ENCODE measurements at regions of chr1 and their contacts with region 1.

Region 1: GRCh38 chr1:55284852-55285251 is 69.7 kb upstream of the USP24 start:
- DNase-seq: peak; percentile 41 to 47
- H3K4me3 ChIP-seq: no peak overlapping the region
- H3K27ac ChIP-seq: no peak overlapping the region
- H3K4me1 ChIP-seq: no peaks in the 10 kb centered on the region
- H3K27me3 ChIP-seq: no peaks in the 10 kb centered on the region
- CTCF ChIP-seq: peak in 5 of 6 experiments; percentile 33 to 86 (median 51)
- POLR2A ChIP-seq: no peak

Region 2: GRCh38 chr1:55233145-55233777 is 51.6 kb before region 1 on chr1:
- intact Hi-C with region 1: no loop called
- DNase-seq: no peak
- H3K4me3 ChIP-seq: no peak overlapping the region
- H3K27ac ChIP-seq: no peak overlapping the region
- H3K4me1 ChIP-seq: no peaks in the 10 kb centered on the region
- H3K27me3 ChIP-seq: no peaks in the 10 kb centered on the region
- CTCF ChIP-seq: no peak
- POLR2A ChIP-seq: no peak

Region 3: DNA sequence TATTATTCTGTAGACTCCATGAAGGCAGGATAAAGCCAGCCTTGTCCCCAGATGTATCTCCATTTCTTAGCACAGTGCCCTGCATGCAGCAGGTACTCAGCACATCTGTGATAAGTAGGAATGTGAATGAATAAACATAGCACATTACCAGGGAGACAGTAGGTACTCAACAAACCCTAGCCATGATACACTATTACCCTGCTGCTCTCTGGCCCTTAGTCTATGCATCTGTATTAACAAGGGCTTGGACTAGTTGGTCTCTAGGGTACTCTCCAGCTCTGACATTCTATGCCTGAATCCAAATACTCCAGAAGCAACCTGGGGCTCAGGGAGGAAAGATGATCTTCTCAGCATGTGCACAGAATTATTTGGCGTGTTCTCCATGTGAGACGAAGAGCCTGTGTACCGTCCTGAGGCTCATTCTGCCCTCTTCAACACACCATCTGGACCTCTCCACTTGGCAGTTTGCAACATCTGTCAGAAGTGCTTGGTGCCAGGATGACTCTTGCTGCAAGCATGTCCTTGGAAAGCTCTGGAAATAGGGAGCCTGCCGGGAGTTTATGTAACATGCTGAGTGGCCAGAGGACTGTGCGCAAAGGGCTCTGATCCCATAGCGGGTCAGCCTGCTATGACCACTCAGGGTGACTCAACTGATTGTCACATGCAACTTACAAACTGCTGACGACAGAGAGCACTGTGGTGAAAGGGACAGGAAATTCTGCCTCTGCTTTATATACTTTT is 158.5 kb after region 1 on chr1:
- intact Hi-C with region 1: no loop called
- DNase-seq: peak; percentile 36
- H3K4me3 ChIP-seq: no peak overlapping the region
- H3K27ac ChIP-seq: peak overlapping the region in 1 of 3 donors; percentile 9
- H3K4me1 ChIP-seq: peaks cover 0 to 5% of the 10 kb centered on the region in 2 donors
- H3K27me3 ChIP-seq: no peaks in the 10 kb centered on the region
- CTCF ChIP-seq: no peak
- POLR2A ChIP-seq: no peak

Region 4: DNA sequence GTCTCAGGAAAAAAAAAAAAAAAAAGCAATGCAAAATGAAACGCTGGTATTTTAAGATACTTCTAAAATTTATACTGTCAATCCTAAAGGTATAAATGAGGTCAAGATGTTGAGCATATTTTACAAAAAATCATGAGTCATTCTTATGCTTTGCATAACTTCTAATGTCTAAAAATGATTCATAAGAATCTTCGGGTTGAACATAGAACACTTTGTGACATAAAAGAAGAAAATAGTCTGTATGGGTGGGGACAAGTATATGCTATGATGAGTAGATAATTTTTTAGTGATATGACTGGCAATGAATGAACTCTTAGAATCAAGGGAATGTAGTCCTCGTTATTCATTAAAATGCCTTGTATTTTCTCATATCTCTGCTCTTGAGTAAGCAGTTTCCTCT is 347.2 kb after region 1 on chr1:
- intact Hi-C with region 1: no loop called
- DNase-seq: no peak
- H3K4me3 ChIP-seq: no peak overlapping the region
- H3K27ac ChIP-seq: peak overlapping the region in 1 of 3 donors; percentile 44
- H3K4me1 ChIP-seq: peaks cover 14 to 18% of the 10 kb centered on the region in 2 donors
- H3K27me3 ChIP-seq: no peaks in the 10 kb centered on the region
- CTCF ChIP-seq: no peak
- POLR2A ChIP-seq: no peak

Region 5: DNA sequence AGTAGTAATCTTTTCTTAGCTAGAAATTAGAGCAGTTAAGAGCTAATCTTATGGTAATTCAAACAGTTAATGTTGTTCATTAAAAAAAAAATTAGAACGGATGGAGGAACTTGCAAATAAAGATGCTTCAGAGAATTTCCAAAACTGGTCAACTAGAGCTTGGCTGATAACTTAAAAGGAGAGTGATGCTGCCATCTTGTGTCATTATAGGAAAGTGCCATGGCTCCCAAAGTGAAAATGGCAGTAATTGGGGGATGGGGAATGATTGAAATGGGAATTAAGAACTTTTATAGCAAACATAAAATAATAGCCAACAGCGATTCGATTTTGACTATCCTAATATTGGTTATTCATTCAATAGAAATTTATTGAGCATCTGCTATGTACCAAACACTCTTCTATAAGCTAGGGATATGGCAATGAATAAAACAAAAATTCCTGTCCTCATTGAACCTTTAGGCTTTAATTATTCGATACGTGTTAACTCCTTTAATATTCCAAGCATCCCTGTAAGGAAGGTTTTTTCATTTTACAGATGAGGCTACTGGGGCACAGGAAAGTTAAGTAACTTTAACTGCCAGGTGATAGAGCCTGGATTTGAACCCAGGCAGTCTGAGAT is 1300.2 kb after region 1 on chr1:
- intact Hi-C with region 1: loop called (anchors 5 kb)
- DNase-seq: peak; percentile 21 to 32
- H3K4me3 ChIP-seq: no peak overlapping the region
- H3K27ac ChIP-seq: no peak overlapping the region
- H3K4me1 ChIP-seq: peaks cover 16 to 28% of the 10 kb centered on the region in 2 donors
- H3K27me3 ChIP-seq: no peaks in the 10 kb centered on the region
- CTCF ChIP-seq: peak; percentile 51 to 98 (median 82)
- POLR2A ChIP-seq: no peak

Region 6: GRCh38 chr1:56709269-56709880 is 1424.5 kb after region 1 on chr1:
- intact Hi-C with region 1: loop called (anchors 5 kb)
- DNase-seq: no peak
- H3K4me3 ChIP-seq: no peak overlapping the region
- H3K27ac ChIP-seq: no peak overlapping the region
- H3K4me1 ChIP-seq: no peaks in the 10 kb centered on the region
- H3K27me3 ChIP-seq: no peaks in the 10 kb centered on the region
- CTCF ChIP-seq: peak in 5 of 6 experiments; percentile 33 to 67 (median 59)
- POLR2A ChIP-seq: no peak

Region 7: DNA sequence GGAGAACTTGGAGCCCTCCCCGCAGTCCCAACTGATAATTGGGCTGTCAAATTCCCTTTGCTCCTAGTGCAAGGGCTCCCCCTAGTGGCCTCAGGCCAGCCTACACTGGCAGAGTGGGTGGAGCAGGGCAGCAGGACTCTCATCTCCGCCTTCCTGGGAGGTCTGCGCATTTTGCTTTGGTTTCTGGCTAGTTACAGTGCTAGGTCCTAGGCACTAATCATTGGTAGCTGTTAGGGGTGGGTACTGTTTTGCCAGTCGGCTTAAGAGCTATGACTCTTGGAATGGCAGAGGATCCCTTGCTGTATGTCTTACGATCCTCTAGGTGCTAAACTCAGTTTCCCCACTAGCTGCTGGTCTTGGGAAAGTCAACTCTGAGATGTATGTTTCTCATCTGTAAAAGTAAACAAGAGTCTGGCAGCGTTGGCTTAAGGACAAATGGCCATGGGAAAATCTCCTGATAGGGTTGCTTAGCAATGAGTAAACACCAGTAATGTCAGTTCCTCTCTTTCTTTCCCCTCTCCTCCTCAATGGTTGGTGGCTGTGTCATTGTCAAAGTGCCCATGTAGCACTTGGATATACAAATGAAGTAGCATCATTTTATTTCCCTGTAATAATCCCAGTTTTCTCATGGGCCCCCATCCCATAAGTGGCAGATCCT is 1536.4 kb after region 1 on chr1:
- intact Hi-C with region 1: loop called (anchors 10 kb)
- DNase-seq: peak; percentile 77 to 89
- H3K4me3 ChIP-seq: no peak overlapping the region
- H3K27ac ChIP-seq: no peak overlapping the region
- H3K4me1 ChIP-seq: peaks cover 12% of the 10 kb centered on the region in 2 donors
- H3K27me3 ChIP-seq: no peaks in the 10 kb centered on the region
- CTCF ChIP-seq: peak; percentile 79 to 94 (median 90)
- POLR2A ChIP-seq: no peak

Measured in thyroid gland (tissue), 4 donors.